Right lobe of liver (tissue), 6 donors: ENCODE measurements at regions of chr4 and their contacts with region 1.

Region 1: GRCh38 chr4:82462415-82462831 is 32.0 kb downstream of the ENOPH1 start:
- DNase-seq: peak; percentile 69 to 88 (median 75)
- ATAC-seq: peak; percentile 96 to 99 (median 97)
- H3K4me3 ChIP-seq: no peak overlapping the region
- H3K27ac ChIP-seq: no peak overlapping the region
- H3K4me1 ChIP-seq: peaks cover 0 to 5% (median 1%) of the 10 kb centered on the region in 4 donors
- H3K27me3 ChIP-seq: no peaks in the 10 kb centered on the region
- CTCF ChIP-seq: peak; percentile 71 to 95 (median 93)
- POLR2A ChIP-seq: no peak

Region 2: GRCh38 chr4:82551714-82552113 is 89.3 kb after region 1 on chr4:
- intact Hi-C with region 1: no loop called
- DNase-seq: no peak
- ATAC-seq: no peak
- H3K4me3 ChIP-seq: no peak overlapping the region
- H3K27ac ChIP-seq: no peak overlapping the region
- H3K4me1 ChIP-seq: peaks cover 0 to 12% (median 2%) of the 10 kb centered on the region in 4 donors
- H3K27me3 ChIP-seq: no peaks in the 10 kb centered on the region
- CTCF ChIP-seq: no peak
- POLR2A ChIP-seq: no peak

Region 3: GRCh38 chr4:82739316-82740179 is 277.1 kb after region 1 on chr4:
- intact Hi-C with region 1: loop called (anchors 5 to 10 kb)
- DNase-seq: peak; percentile 75 to 85 (median 83)
- ATAC-seq: peak; percentile 100
- H3K4me3 ChIP-seq: no peak overlapping the region
- H3K27ac ChIP-seq: no peak overlapping the region
- H3K4me1 ChIP-seq: no peaks in the 10 kb centered on the region
- H3K27me3 ChIP-seq: no peaks in the 10 kb centered on the region
- CTCF ChIP-seq: peak in 3 of 4 donors; percentile 95 to 100 (median 99)
- POLR2A ChIP-seq: no peak